B cell (primary cell): ENCODE measurements at regions of chr17 and their contacts with region 1.

Region 1: GRCh38 chr17:39722965-39723848 is 7.1 kb downstream of the MIEN1 start:
- DNase-seq: no peak
- ATAC-seq: peak; percentile 43
- H3K4me3 ChIP-seq: no peak overlapping the region
- H3K4me3 Mint-ChIP-seq: no peak overlapping the region
- H3K27ac ChIP-seq: no peak overlapping the region
- H3K27ac Mint-ChIP-seq: no peak overlapping the region
- H3K4me1 ChIP-seq: no peaks in the 10 kb centered on the region
- H3K4me1 Mint-ChIP-seq: peaks cover 9% of the 10 kb centered on the region
- H3K27me3 ChIP-seq: no peaks in the 10 kb centered on the region
- H3K27me3 Mint-ChIP-seq: no peaks in the 10 kb centered on the region
- CTCF ChIP-seq: no peak

Region 2: GRCh38 chr17:39605492-39606433 is 117.4 kb before region 1 on chr17:
- CTCF ChIA-PET with region 1: no interaction called
- POLR2A ChIA-PET with region 1: no interaction called
- intact Hi-C with region 1: no loop called
- DNase-seq: peak; percentile 72
- ATAC-seq: peak; percentile 11
- H3K4me3 ChIP-seq: peak overlapping the region in 2 of 5 experiments; percentile 21 to 39
- H3K4me3 Mint-ChIP-seq: peak overlapping the region; percentile 78
- H3K27ac ChIP-seq: no peak overlapping the region
- H3K27ac Mint-ChIP-seq: no peak overlapping the region
- H3K4me1 ChIP-seq: peaks cover 44 to 47% of the 10 kb centered on the region in 2 donors
- H3K4me1 Mint-ChIP-seq: peaks cover 32% of the 10 kb centered on the region
- H3K27me3 ChIP-seq: peaks cover 0 to 86% (median 68%) of the 10 kb centered on the region in 4 experiments
- H3K27me3 Mint-ChIP-seq: peaks cover 58% of the 10 kb centered on the region
- CTCF ChIP-seq: no peak

Region 3: GRCh38 chr17:39676198-39676819 is 46.9 kb before region 1 on chr17:
- CTCF ChIA-PET with region 1: interaction called, 28 read pairs
- POLR2A ChIA-PET with region 1: interaction called, 10 read pairs
- intact Hi-C with region 1: no loop called
- DNase-seq: peak; percentile 69
- ATAC-seq: peak; percentile 61
- H3K4me3 ChIP-seq: no peak overlapping the region
- H3K4me3 Mint-ChIP-seq: peak overlapping the region; percentile 68
- H3K27ac ChIP-seq: peak overlapping the region; percentile 65 to 94
- H3K27ac Mint-ChIP-seq: peak overlapping the region; percentile 98
- H3K4me1 ChIP-seq: peaks cover 79 to 96% of the 10 kb centered on the region in 2 donors
- H3K4me1 Mint-ChIP-seq: peaks cover 85% of the 10 kb centered on the region
- H3K27me3 ChIP-seq: peaks cover 0 to 3% (median 0%) of the 10 kb centered on the region in 4 experiments
- H3K27me3 Mint-ChIP-seq: no peaks in the 10 kb centered on the region
- CTCF ChIP-seq: no peak

Region 4: GRCh38 chr17:39699818-39700147 is 23.4 kb before region 1 on chr17 and contains the start of gene ERBB2:
- CTCF ChIA-PET with region 1: no interaction called
- POLR2A ChIA-PET with region 1: no interaction called
- intact Hi-C with region 1: no loop called
- DNase-seq: no peak
- ATAC-seq: no peak
- H3K4me3 ChIP-seq: peak within 1 kb of the TSS in 1 of 5 experiments; percentile 9
- H3K4me3 Mint-ChIP-seq: peak within 1 kb of the TSS; percentile 52
- H3K27ac ChIP-seq: no peak within 1 kb of the TSS
- H3K27ac Mint-ChIP-seq: no peak within 1 kb of the TSS
- H3K4me1 ChIP-seq: peaks cover 6 to 17% of the 10 kb centered on the region in 2 donors
- H3K4me1 Mint-ChIP-seq: peaks cover 11% of the 10 kb centered on the region
- H3K27me3 ChIP-seq: peaks cover 0 to 33% (median 17%) of the 10 kb centered on the region in 4 experiments
- H3K27me3 Mint-ChIP-seq: peaks cover 33% of the 10 kb centered on the region
- CTCF ChIP-seq: no peak
- total RNA-seq, gene ERBB2: 8.4 TPM in 2 replicates

Region 5: GRCh38 chr17:39711851-39712250 is 11.4 kb before region 1 on chr17:
- CTCF ChIA-PET with region 1: no interaction called
- POLR2A ChIA-PET with region 1: interaction called, 13 read pairs
- intact Hi-C with region 1: no loop called
- DNase-seq: no peak
- ATAC-seq: no peak
- H3K4me3 ChIP-seq: no peak overlapping the region
- H3K4me3 Mint-ChIP-seq: no peak overlapping the region
- H3K27ac ChIP-seq: no peak overlapping the region
- H3K27ac Mint-ChIP-seq: no peak overlapping the region
- H3K4me1 ChIP-seq: peaks cover 11 to 16% of the 10 kb centered on the region in 2 donors
- H3K4me1 Mint-ChIP-seq: peaks cover 8% of the 10 kb centered on the region
- H3K27me3 ChIP-seq: no peaks in the 10 kb centered on the region
- H3K27me3 Mint-ChIP-seq: no peaks in the 10 kb centered on the region
- CTCF ChIP-seq: no peak

Region 6: DNA sequence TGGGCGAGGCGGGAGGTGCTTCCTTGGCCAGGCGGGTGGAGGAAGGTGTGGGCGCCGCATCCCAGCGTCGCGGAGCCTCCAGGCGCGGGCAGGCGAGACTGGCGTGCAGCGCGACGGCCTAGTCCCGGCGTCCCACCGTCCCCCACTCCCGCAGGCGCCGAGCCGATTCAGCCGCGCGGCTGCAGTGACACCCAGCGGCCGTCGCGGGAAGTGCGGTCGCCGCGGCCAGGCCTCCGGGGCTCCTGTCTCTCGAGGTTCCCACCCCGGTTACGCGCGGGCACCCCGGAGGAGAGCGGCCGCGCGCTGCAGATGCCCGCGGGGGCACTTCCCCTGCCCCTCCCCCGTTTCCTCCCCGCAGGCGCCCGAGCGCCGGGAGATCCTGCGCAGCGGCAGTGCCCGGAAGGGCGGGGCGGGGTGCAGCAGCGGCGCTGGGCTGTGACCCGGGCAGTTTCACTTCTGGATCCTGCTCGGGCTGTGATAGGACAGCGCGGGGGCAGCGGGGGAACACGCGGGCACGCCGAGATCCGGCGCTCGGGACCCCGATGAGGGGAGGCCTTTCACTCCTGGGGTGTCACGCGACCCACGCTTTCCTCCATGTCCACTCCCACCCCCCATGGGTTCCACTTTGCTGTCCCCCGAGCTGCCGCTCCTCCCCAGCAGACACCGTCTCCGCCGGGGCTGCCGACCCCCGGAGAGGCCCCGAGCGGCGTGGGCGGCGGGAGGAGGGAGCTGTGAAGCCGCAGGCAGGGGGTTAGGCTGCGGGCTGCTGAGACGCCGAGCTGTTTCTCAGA is 31.1 kb after region 1 on chr17:
- CTCF ChIA-PET with region 1: no interaction called
- POLR2A ChIA-PET with region 1: no interaction called
- intact Hi-C with region 1: no loop called
- DNase-seq: peak; percentile 99
- ATAC-seq: peak; percentile 67
- H3K4me3 ChIP-seq: peak overlapping the region in 4 of 5 experiments; percentile 46 to 63 (median 56)
- H3K4me3 Mint-ChIP-seq: peak overlapping the region; percentile 86
- H3K27ac ChIP-seq: peak overlapping the region; percentile 100
- H3K27ac Mint-ChIP-seq: peak overlapping the region; percentile 97
- H3K4me1 ChIP-seq: peaks cover 57 to 60% of the 10 kb centered on the region in 2 donors
- H3K4me1 Mint-ChIP-seq: peaks cover 63% of the 10 kb centered on the region
- H3K27me3 ChIP-seq: no peaks in the 10 kb centered on the region
- H3K27me3 Mint-ChIP-seq: no peaks in the 10 kb centered on the region
- CTCF ChIP-seq: peak; percentile 93